ENCODE measurements at regions of chr9 and their contacts with region 1.

Region 1: GRCh38 chr9:4740638-4741364 is at the start of gene AK3:
- DNase-seq: peak; percentile 91 to 94 (median 93)
- ATAC-seq: peak; percentile 89 to 95 (median 93)
- H3K4me3 ChIP-seq: peak within 1 kb of the TSS; percentile 54 to 98 (median 89)
- H3K27ac ChIP-seq: peak within 1 kb of the TSS; percentile 90 to 97 (median 94)
- H3K4me1 ChIP-seq: peaks cover 0 to 29% (median 15%) of the 10 kb centered on the region in 12 donors
- H3K27me3 ChIP-seq: no peaks in the 10 kb centered on the region
- CTCF ChIP-seq: peak in 10 of 12 donors; percentile 16 to 60 (median 34)
- POLR2A ChIP-seq: peak in 1 of 2 donors; percentile 87
- total RNA-seq, gene AK3: 117 to 231 (median 159) TPM

Region 2: GRCh38 chr9:4365055-4365454 is 375.7 kb before region 1 on chr9:
- intact Hi-C with region 1: no loop called
- DNase-seq: no peak
- ATAC-seq: no peak
- H3K4me3 ChIP-seq: no peak overlapping the region
- H3K27ac ChIP-seq: no peak overlapping the region
- H3K4me1 ChIP-seq: no peaks in the 10 kb centered on the region
- H3K27me3 ChIP-seq: no peaks in the 10 kb centered on the region
- CTCF ChIP-seq: no peak
- POLR2A ChIP-seq: no peak

Region 3: GRCh38 chr9:4382722-4383317 is 358.0 kb before region 1 on chr9:
- intact Hi-C with region 1: loop called in 1 of 10 experiments (anchors 5 kb)
- DNase-seq: no peak
- ATAC-seq: no peak
- H3K4me3 ChIP-seq: no peak overlapping the region
- H3K27ac ChIP-seq: no peak overlapping the region
- H3K4me1 ChIP-seq: no peaks in the 10 kb centered on the region
- H3K27me3 ChIP-seq: no peaks in the 10 kb centered on the region
- CTCF ChIP-seq: peak; percentile 30 to 74 (median 62)
- POLR2A ChIP-seq: no peak

Region 4: GRCh38 chr9:4662108-4662988 is 78.5 kb before region 1 on chr9 and contains the start of gene PLPP6:
- intact Hi-C with region 1: loop called in 3 of 10 experiments (anchors 5 kb)
- DNase-seq: peak; percentile 88 to 92 (median 90)
- ATAC-seq: peak; percentile 92 to 97 (median 96)
- H3K4me3 ChIP-seq: peak within 1 kb of the TSS; percentile 50 to 96 (median 81)
- H3K27ac ChIP-seq: peak within 1 kb of the TSS; percentile 27 to 90 (median 78)
- H3K4me1 ChIP-seq: peaks cover 0 to 51% (median 32%) of the 10 kb centered on the region in 12 donors
- H3K27me3 ChIP-seq: no peaks in the 10 kb centered on the region
- CTCF ChIP-seq: peak; percentile 29 to 72 (median 52)
- POLR2A ChIP-seq: peak in 1 of 2 donors; percentile 74
- total RNA-seq, gene PLPP6: 2.4 to 5.4 (median 3.6) TPM

Region 5: GRCh38 chr9:4679268-4680172 is 61.3 kb before region 1 on chr9 and contains the start of gene CDC37L1:
- intact Hi-C with region 1: loop called in 3 of 10 experiments (anchors 1 to 5 kb)
- DNase-seq: peak; percentile 98 to 99 (median 99)
- ATAC-seq: peak; percentile 98 to 99 (median 99)
- H3K4me3 ChIP-seq: peak within 1 kb of the TSS; percentile 68 to 96 (median 82)
- H3K27ac ChIP-seq: peak within 1 kb of the TSS; percentile 93 to 99 (median 97)
- H3K4me1 ChIP-seq: peaks cover 0 to 36% (median 23%) of the 10 kb centered on the region in 12 donors
- H3K27me3 ChIP-seq: no peaks in the 10 kb centered on the region
- CTCF ChIP-seq: peak; percentile 41 to 81 (median 68)
- POLR2A ChIP-seq: peak; percentile 83 to 98
- total RNA-seq, gene CDC37L1: 29.3 to 100 (median 34.9) TPM

Region 6: DNA sequence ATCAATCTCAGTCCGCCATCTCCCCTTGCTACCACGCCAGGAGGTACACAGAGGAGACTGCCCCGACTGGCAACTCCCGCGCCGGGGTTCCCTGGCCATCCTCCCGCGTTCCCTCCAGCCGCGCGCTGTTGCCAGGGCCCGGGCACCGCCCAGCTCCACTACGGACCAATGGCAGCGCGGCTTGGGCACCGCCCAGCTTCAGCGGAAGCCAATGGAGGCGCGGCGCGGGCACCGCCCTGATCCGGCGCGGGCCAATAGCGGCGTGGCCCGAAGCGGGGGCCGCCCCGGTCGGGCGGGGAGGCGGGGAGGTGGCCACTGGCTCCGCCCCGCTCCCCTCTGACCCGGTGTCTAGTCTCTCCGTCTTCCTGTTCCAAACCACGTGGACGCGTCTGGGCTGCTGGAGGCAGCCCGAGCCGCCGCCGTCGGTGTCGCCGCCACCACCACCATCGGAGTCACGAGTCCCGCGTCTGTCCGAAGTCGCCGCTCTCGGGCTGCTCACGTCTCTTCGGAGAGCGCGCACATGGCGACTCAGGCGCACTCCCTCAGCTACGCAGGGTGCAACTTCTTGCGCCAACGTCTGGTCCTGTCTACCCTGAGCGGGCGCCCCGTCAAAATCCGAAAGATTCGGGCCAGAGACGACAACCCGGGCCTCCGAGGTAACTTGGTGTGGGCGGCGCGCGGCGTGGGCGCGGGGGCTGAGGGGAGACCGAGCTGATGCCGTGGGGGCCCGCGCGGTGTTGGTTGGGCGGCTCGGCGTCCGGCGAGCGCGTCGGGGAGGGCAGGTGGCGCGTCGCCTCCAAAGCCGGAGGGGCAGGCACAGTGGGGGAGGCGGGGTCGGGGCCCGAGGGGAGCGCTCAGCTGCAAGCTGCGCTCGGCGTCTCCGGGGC is 52.0 kb after region 1 on chr9 and contains the start of gene RCL1:
- intact Hi-C with region 1: loop called in 2 of 10 experiments (anchors 10 kb)
- DNase-seq: peak; percentile 96 to 98 (median 96)
- ATAC-seq: peak; percentile 99 to 100 (median 99)
- H3K4me3 ChIP-seq: peak within 1 kb of the TSS; percentile 62 to 98 (median 88)
- H3K27ac ChIP-seq: peak within 1 kb of the TSS; percentile 46 to 88 (median 81)
- H3K4me1 ChIP-seq: peaks cover 0 to 27% (median 17%) of the 10 kb centered on the region in 12 donors
- H3K27me3 ChIP-seq: no peaks in the 10 kb centered on the region
- CTCF ChIP-seq: no peak
- POLR2A ChIP-seq: peak in 1 of 2 donors; percentile 67
- total RNA-seq, gene RCL1: 5.1 to 10.1 (median 7.2) TPM

Region 7: GRCh38 chr9:4936823-4937222 is 196.0 kb after region 1 on chr9:
- intact Hi-C with region 1: no loop called
- DNase-seq: no peak
- ATAC-seq: no peak
- H3K4me3 ChIP-seq: peak overlapping the region in 3 of 12 donors; percentile 10
- H3K27ac ChIP-seq: peak overlapping the region in 6 of 12 donors; percentile 15 to 91 (median 24)
- H3K4me1 ChIP-seq: peaks cover 0 to 81% (median 18%) of the 10 kb centered on the region in 12 donors
- H3K27me3 ChIP-seq: no peaks in the 10 kb centered on the region
- CTCF ChIP-seq: no peak
- POLR2A ChIP-seq: no peak

Region 8: GRCh38 chr9:5843794-5844504 is 1103.1 kb after region 1 on chr9:
- intact Hi-C with region 1: no loop called
- DNase-seq: no peak
- ATAC-seq: peak in 1 of 4 donors; percentile 37
- H3K4me3 ChIP-seq: no peak overlapping the region
- H3K27ac ChIP-seq: peak overlapping the region in 3 of 12 donors; percentile 24 to 54 (median 30)
- H3K4me1 ChIP-seq: peaks cover 0 to 32% (median 0%) of the 10 kb centered on the region in 12 donors
- H3K27me3 ChIP-seq: no peaks in the 10 kb centered on the region
- CTCF ChIP-seq: no peak
- POLR2A ChIP-seq: no peak

Measured in heart left ventricle (tissue), 16 donors.